PC-9 (cell line): ENCODE measurements at regions of chr1 and their contacts with region 1.

Region 1: GRCh38 chr1:151984313-151984956 is 9.2 kb downstream of the S100A10 start:
- DNase-seq: no peak
- H3K4me3 ChIP-seq: no peak overlapping the region
- H3K27ac ChIP-seq: peak overlapping the region; percentile 9; the same call in 1 of the 2 replicates
- H3K4me1 ChIP-seq: peaks cover 93% of the 10 kb centered on the region
- H3K27me3 ChIP-seq: no peaks in the 10 kb centered on the region
- CTCF ChIP-seq: no peak

Region 2: GRCh38 chr1:151494741-151495281 is 489.6 kb before region 1 on chr1:
- CTCF ChIA-PET with region 1: no interaction called
- POLR2A ChIA-PET with region 1: interaction called, 37 read pairs
- intact Hi-C with region 1: no loop called
- DNase-seq: peak; percentile 64 to 92
- H3K4me3 ChIP-seq: no peak overlapping the region
- H3K27ac ChIP-seq: peak overlapping the region; percentile 73
- H3K4me1 ChIP-seq: peaks cover 25% of the 10 kb centered on the region
- H3K27me3 ChIP-seq: no peaks in the 10 kb centered on the region
- CTCF ChIP-seq: no peak

Region 3: DNA sequence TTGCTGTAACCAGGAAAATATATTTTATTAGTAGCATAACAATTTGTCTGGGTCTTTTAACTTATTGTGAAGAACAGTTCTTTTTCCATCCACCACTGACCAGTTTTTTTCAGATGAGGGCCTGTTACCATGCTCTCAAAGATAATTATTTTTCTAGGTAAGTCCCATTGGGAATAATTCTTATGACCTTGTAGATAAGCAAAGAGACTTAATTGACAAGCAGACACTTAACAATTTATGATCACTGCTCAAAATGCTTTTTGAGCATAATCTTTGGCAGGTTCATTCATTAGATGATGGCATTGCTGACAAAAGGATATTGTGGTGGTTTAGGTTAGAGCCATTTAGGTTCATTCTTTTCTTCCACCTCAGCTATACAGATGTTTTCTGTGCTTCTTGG is 366.0 kb before region 1 on chr1:
- CTCF ChIA-PET with region 1: no interaction called
- POLR2A ChIA-PET with region 1: interaction called, 12 read pairs
- intact Hi-C with region 1: no loop called
- DNase-seq: no peak
- H3K4me3 ChIP-seq: no peak overlapping the region
- H3K27ac ChIP-seq: no peak overlapping the region
- H3K4me1 ChIP-seq: peaks cover 48% of the 10 kb centered on the region
- H3K27me3 ChIP-seq: no peaks in the 10 kb centered on the region
- CTCF ChIP-seq: no peak

Region 4: DNA sequence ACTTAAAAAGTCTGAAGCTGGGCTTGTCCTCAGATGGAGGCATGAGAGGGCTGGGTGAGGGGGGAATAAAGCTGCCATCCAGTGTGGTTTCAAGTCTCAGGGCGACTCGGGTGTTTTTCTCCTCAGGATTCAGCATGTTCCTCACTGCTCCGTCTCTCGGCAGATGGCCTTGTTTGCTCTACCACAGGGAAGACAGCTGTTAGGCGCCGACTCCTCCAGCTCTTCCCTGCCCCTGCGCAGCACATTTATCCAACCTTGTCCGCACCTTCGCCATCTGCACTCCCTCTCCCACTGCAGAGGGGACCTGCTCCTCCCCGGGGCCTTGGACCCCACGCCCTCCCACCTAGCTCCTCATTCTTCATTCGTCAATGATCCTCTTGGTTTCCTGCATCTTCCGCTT is 68.9 kb after region 1 on chr1:
- CTCF ChIA-PET with region 1: no interaction called
- POLR2A ChIA-PET with region 1: no interaction called
- intact Hi-C with region 1: no loop called
- DNase-seq: no peak
- H3K4me3 ChIP-seq: no peak overlapping the region
- H3K27ac ChIP-seq: no peak overlapping the region
- H3K4me1 ChIP-seq: peaks cover 31% of the 10 kb centered on the region
- H3K27me3 ChIP-seq: no peaks in the 10 kb centered on the region; the same call in 1 of the 2 replicates
- CTCF ChIP-seq: no peak